ENCODE measurements at regions of chrX and their contacts with region 1.

Region 1: DNA sequence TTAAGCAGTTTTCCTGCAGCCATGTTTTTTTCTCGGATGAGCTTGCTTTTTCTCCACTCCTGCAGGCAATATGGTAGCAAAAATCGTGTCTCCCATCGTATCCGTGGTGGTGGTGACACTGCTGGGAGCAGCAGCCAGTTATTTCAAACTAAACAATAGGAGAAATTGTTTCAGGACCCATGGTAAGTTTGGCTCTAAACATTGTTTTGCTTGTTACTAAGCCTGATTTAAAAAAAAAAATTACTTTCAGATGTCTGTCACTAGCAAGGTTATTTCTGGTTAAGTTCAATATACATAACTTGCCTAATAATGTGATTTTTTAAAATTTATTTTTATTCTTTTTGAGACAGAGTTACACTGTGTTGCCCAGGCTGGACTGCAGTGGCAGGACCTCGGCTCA is 17.5 kb upstream of the GYG2 start:
- DNase-seq: no peak
- ATAC-seq: no peak

Region 2: GRCh38 chrX:2640275-2641150 is 170.8 kb before region 1 on chrX:
- intact Hi-C with region 1: loop called (anchors 5 kb)
- DNase-seq: no peak
- ATAC-seq: no peak

Region 3: DNA sequence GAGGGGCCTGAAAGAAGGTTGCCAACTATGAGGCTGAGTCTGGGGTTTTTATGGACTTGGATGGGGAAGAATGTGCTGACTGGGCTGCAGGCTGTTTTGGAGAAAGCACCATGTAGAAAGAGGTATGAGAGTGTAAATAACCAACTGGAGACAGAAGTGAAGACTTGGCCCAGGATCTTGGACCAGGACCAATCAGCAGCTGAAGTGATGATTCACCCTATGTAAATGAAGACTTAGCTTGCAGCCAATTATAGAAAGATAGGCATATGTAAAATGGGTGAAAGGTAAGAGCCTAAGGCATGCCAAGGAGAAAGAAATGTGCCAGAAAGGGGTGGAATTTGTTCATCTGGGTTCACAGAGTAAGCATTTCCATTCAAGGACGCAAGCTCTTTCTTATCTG is 1758.9 kb after region 1 on chrX:
- intact Hi-C with region 1: no loop called
- DNase-seq: no peak
- ATAC-seq: no peak

Measured in Right ventricle myocardium superior (tissue), 1 donor.